ENCODE measurements at regions of chr15 and their contacts with region 1.

Region 1: GRCh38 chr15:90320061-90320884 is 31.8 kb upstream of the ZNF774 start:
- DNase-seq: peak; percentile 79
- H3K4me3 Mint-ChIP-seq: no peak overlapping the region
- H3K27ac Mint-ChIP-seq: no peak overlapping the region
- H3K4me1 Mint-ChIP-seq: peaks cover 3% of the 10 kb centered on the region
- H3K27me3 Mint-ChIP-seq: no peaks in the 10 kb centered on the region

Region 2: DNA sequence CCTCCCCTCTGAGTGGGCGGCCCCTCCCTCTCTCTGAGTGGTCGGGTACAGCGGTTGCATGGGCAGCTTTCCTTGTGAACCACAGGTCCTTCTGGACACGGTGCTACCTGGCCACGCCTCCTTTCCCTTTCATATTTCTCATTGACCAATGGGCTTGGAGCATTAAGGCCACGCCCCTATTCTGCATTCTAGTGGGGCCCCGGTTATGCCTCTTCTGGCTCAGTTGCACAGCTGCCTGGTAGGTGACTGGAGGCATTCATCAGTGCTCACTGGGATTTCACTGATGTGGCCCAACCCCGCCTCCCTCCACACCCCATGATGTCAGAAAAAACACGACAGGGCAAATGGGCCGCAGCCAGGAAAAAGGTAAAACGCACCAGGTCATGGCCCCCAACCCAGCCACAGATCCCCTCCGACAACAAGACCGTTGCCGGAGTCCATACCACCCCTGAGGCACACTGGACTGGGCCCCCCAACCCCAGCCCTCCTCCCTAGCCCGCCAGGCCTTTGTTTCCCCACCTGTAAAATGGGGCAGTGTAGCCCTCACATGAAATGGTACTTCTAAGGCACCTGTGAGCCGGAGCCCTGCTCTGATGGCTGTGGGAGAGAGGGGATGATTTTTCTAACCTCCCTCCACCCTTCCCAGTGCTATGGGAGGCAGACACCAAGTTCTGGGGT is 28.5 kb before region 1 on chr15:
- CTCF ChIA-PET with region 1: interaction called, 16 read pairs
- POLR2A ChIA-PET with region 1: no interaction called
- intact Hi-C with region 1: no loop called
- DNase-seq: peak; percentile 33
- H3K4me3 Mint-ChIP-seq: no peak overlapping the region
- H3K27ac Mint-ChIP-seq: no peak overlapping the region
- H3K4me1 Mint-ChIP-seq: peaks cover 5% of the 10 kb centered on the region
- H3K27me3 Mint-ChIP-seq: no peaks in the 10 kb centered on the region

Region 3: DNA sequence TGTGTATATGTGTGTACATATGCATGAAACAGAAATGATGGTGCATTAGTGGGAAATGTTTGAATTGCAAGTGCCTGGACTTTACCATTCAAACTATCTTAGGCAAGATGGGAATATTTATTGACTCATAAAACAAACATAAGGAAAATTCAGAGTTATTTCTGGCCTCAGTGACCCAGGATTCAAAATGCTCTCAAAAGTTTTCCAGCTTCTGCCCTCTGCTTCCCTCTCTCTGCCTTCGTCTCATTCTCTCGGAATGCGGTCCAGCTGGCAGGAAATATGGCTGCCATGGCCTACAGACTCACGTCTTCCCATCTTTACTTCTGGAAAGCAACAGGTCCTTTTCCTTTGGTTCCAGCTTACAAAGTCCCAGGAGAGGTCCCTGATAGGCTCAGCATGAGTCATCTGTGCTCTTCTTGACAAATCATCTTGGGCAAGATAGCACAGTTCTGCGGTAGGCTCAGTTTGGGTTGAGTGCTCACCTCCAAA is 23.1 kb after region 1 on chr15:
- CTCF ChIA-PET with region 1: interaction called, 11 read pairs
- POLR2A ChIA-PET with region 1: no interaction called
- intact Hi-C with region 1: no loop called
- DNase-seq: no peak
- H3K4me3 Mint-ChIP-seq: no peak overlapping the region
- H3K27ac Mint-ChIP-seq: no peak overlapping the region
- H3K4me1 Mint-ChIP-seq: peaks cover 8% of the 10 kb centered on the region
- H3K27me3 Mint-ChIP-seq: no peaks in the 10 kb centered on the region

Region 4: DNA sequence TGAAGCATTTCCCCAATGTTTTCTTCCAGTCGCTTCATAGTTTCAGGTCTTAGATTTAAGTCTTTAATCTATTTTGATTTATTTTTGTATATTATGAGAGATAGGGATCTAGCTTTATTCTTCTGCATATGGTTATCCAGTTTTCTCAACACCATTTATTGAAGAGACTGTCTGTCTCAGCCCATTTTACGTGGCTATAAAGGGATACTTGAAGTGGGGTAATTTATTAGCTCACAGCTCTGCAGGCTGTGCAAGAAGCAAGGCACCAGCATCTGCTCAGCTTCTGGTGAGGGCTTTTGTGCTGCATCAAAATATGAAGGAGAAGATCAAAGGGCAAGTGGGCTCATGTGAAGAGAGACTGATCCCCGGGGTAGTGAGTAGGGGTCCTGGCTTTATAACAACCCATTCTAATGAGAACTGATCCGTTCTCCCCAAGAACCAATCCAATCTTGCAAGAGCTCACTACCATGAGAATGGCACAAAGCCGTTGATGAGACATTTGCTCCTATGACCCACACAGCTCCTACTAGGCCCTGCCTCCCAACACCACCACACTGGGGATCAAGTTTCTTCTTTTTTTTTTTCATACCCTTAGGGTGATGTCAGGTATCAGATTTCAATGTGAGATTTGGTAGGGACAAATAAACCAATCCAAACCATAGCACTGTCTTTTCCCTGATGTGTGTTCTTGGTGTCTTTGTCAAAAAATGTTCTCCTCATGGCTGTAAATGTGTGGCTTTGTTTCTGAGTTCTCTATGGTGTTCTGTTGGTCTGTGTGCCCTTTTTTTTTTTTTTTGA is 131.0 kb after region 1 on chr15:
- CTCF ChIA-PET with region 1: interaction called, 35 read pairs
- POLR2A ChIA-PET with region 1: no interaction called
- intact Hi-C with region 1: no loop called
- DNase-seq: no peak
- H3K4me3 Mint-ChIP-seq: no peak overlapping the region
- H3K27ac Mint-ChIP-seq: no peak overlapping the region
- H3K4me1 Mint-ChIP-seq: no peaks in the 10 kb centered on the region
- H3K27me3 Mint-ChIP-seq: no peaks in the 10 kb centered on the region

Region 5: DNA sequence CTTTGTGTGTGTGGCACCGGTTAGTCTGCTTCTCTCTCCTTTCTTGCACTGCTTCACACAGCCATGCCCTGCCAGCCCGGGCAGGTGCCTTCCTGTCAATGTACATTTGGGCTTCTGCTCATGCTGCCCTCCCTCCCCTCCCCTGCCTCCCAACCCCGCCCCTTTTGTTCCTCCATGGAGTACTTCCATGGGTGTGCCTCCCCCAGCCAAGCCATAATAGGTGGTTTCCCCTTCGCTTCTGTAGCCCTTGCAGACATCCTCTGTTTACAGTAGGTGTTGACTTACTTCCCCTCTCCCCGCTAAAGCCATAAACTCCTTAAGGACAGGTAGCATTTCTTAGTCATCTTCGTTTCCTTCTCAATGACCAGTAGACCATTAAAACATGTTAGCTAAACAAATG is 177.6 kb after region 1 on chr15:
- CTCF ChIA-PET with region 1: interaction called, 15 read pairs
- POLR2A ChIA-PET with region 1: no interaction called
- intact Hi-C with region 1: no loop called
- DNase-seq: no peak
- H3K4me3 Mint-ChIP-seq: no peak overlapping the region
- H3K27ac Mint-ChIP-seq: no peak overlapping the region
- H3K4me1 Mint-ChIP-seq: no peaks in the 10 kb centered on the region
- H3K27me3 Mint-ChIP-seq: no peaks in the 10 kb centered on the region

Region 6: GRCh38 chr15:90886041-90886614 is 565.9 kb after region 1 on chr15:
- CTCF ChIA-PET with region 1: interaction called, 10 read pairs
- POLR2A ChIA-PET with region 1: no interaction called
- intact Hi-C with region 1: loop called (anchors 10 kb)
- DNase-seq: peak; percentile 86
- H3K4me3 Mint-ChIP-seq: peak overlapping the region; percentile 26
- H3K27ac Mint-ChIP-seq: peak overlapping the region; percentile 18
- H3K4me1 Mint-ChIP-seq: peaks cover 20% of the 10 kb centered on the region
- H3K27me3 Mint-ChIP-seq: peaks cover 6% of the 10 kb centered on the region